ENCODE measurements at regions of chr11 and their contacts with region 1.

Region 1: GRCh38 chr11:73661035-73661628 is 14.8 kb downstream of the PLEKHB1 start:
- DNase-seq: peak; percentile 81 to 95 (median 94)
- ATAC-seq: peak; percentile 98
- H3K4me3 ChIP-seq: peak overlapping the region; percentile 20; the same call in 1 of the 2 replicates
- H3K27ac ChIP-seq: no peak overlapping the region
- H3K4me1 ChIP-seq: peaks cover 6 to 12% of the 10 kb centered on the region in 2 experiments; a peak in 4 of 5 replicates
- H3K27me3 ChIP-seq: peaks cover 0 to 4% of the 10 kb centered on the region in 2 experiments; a peak in 1 of 5 replicates
- CTCF ChIP-seq: peak; percentile 96 to 98 (median 97)
- EP300 ChIP-seq: 0 out of 2 replicates have a peak, but pooled peaks have one; percentile 13
- POLR2A ChIP-seq: no peak
- RAD21 ChIP-seq: peak; percentile 97 to 99

Region 2: GRCh38 chr11:73350908-73351636 is 310.1 kb before region 1 on chr11:
- CTCF ChIA-PET with region 1: interaction called, 13 read pairs
- POLR2A ChIA-PET with region 1: interaction called, 3 read pairs
- in situ Hi-C with region 1: no loop called
- intact Hi-C with region 1: loop called (anchors 5 kb)
- DNase-seq: peak; percentile 71 to 88 (median 86)
- ATAC-seq: peak; percentile 82
- H3K4me3 ChIP-seq: no peak overlapping the region
- H3K27ac ChIP-seq: no peak overlapping the region
- H3K4me1 ChIP-seq: peaks cover 3 to 11% of the 10 kb centered on the region in 2 experiments; a peak in 2 of 5 replicates
- H3K27me3 ChIP-seq: peaks cover 16 to 46% of the 10 kb centered on the region in 2 experiments
- CTCF ChIP-seq: peak; percentile 91 to 98 (median 98)
- EP300 ChIP-seq: no peak
- POLR2A ChIP-seq: no peak
- RAD21 ChIP-seq: peak; percentile 86 to 89

Region 3: DNA sequence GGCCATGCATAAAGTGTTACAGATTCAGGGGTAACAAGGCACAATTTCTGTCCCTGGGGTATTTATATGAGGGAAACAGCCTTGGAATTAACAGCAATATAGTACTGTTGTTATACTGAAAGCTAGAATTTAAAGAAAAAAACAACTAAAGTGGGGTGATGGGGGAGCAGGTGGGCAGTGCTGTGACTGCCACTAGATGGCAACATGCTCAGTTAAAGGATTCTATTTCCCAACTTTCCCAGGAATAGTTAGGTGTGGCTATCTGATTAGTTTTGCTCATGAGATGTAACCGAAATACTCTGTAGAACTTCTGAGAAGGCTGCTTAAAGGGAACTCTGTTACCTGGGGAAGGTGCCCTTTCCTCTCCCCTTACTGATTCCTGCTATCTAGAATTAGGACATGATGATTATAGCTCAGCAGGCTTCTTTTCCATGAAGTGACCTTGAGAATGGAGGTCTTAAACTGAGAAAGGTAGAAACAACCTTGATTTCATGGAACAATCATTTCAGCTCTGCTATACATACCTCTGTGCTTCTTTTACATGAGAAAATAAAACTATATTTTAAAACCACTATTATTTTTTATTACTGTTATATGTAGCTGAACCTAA is 182.3 kb before region 1 on chr11:
- CTCF ChIA-PET with region 1: interaction called, 11 read pairs
- POLR2A ChIA-PET with region 1: no interaction called
- in situ Hi-C with region 1: no loop called
- intact Hi-C with region 1: loop called (anchors 2 kb)
- DNase-seq: peak; percentile 31 to 44 (median 32)
- ATAC-seq: peak; percentile 75
- H3K4me3 ChIP-seq: no peak overlapping the region
- H3K27ac ChIP-seq: no peak overlapping the region
- H3K4me1 ChIP-seq: no peaks in the 10 kb centered on the region
- H3K27me3 ChIP-seq: no peaks in the 10 kb centered on the region
- CTCF ChIP-seq: peak; percentile 60 to 79 (median 73)
- EP300 ChIP-seq: no peak
- POLR2A ChIP-seq: no peak
- RAD21 ChIP-seq: peak; percentile 27 to 64

Region 4: DNA sequence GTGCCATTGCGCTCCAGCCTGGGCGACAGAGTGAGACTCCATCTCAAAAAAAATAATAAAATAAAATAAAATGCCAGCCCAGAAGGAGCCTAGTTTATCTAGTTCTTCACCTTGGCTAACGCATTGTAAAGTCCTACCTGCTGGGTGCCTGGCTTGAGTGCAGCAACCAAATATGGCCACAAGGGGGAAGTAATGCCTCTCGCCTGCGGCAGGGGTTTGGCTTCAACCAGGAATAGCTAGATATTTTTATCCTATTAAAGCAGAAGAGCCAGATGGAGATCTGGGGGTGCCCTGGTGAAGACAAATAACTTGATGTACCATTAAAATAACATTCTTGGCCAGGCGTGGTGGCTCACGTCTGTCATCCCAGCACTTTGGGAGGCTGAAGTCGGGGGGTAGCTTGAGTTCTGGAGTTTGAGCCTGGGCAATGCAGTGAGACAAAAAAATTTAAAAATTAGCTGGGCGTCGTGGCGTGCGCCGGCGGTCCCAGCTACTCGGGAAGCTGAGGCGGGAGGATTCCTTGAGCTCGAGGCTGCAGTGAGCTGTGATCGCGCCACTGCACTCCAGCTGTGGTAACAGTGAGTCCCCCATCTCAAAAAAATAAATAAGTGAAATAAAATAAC is 35.3 kb before region 1 on chr11:
- CTCF ChIA-PET with region 1: interaction called, 13 read pairs
- POLR2A ChIA-PET with region 1: interaction called, 3 read pairs
- in situ Hi-C with region 1: no loop called
- intact Hi-C with region 1: loop called (anchors 1 kb)
- DNase-seq: peak; percentile 80 to 83 (median 82)
- ATAC-seq: peak; percentile 94
- H3K4me3 ChIP-seq: no peak overlapping the region
- H3K27ac ChIP-seq: no peak overlapping the region
- H3K4me1 ChIP-seq: peaks cover 0 to 5% of the 10 kb centered on the region in 2 experiments; a peak in 2 of 5 replicates
- H3K27me3 ChIP-seq: peaks cover 5% of the 10 kb centered on the region in 2 experiments; a peak in 3 of 5 replicates
- CTCF ChIP-seq: peak; percentile 85 to 95 (median 91)
- EP300 ChIP-seq: no peak
- POLR2A ChIP-seq: no peak
- RAD21 ChIP-seq: peak; percentile 61 to 90

Measured in K562 (cell line).